ENCODE measurements at regions of chr3 and their contacts with region 1.

Region 1: DNA sequence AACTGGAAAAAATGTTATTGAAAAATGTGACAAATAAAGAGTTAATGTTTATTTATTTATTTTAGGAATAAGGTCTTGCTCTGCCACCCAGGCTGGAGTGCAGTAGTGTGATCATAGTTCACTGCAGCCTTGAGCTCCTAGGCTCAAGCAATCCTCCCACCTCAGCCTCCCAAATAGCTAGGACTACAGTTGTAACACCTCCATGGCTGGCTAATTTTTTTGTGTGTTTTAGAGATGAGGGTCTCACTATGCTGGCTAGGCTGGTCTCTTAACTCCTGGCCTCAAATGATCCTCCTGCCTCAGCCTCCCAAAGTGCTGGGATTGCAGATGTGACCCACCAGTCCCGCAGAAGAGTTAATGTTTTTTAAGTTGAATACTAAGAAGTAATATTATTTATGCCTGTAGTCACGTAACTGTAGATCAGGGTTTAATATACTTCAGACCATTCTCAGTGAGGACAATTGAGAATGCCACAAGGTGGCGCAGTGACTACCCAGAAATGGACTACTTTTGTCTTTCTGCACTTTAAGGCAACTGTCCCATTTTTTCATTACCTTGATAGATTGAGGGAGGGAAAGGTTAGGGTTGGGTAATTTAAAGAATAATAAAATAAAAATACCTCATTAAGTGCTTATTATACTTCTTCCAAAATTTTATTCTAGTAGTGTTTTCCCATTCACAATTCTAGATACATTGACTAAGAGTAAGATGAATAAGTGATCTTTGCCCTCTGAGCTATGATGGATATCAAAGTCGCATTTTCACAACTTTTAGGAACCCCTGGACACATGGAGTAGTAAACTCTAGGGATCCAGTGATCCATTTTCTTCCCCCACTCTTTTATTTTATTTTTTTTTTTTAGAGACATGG is 6.0 kb downstream of the MUC13 start:
- DNase-seq: peak in 7 of 10 donors; percentile 19 to 74 (median 57)
- H3K4me3 ChIP-seq: no peak overlapping the region
- H3K27ac ChIP-seq: no peak overlapping the region
- H3K27me3 ChIP-seq: no peaks in the 10 kb centered on the region
- CTCF ChIP-seq: peak; percentile 45 to 80 (median 68)

Region 2: DNA sequence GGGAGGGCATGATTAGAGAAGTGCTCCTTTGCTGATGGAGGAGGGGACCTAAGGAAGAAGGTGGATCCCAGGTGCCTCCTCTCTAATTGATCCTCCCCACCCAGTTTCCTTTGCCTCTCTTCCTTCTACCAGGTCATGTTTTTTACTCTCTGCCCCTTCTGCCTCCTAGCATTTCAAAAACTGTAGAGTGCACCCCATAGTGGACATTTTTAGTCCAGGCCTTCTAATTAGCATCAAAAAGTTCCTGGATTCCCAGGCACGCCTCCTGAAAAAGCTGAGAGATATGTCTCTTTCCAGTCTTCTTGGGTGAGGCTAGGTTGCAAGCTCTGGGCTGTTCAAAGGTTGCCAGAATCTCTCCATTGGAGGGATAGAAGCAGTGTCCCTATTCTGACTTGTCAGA is 22.7 kb before region 1 on chr3:
- intact Hi-C with region 1: no loop called
- DNase-seq: no peak
- H3K4me3 ChIP-seq: no peak overlapping the region
- H3K27ac ChIP-seq: no peak overlapping the region
- H3K27me3 ChIP-seq: no peaks in the 10 kb centered on the region
- CTCF ChIP-seq: no peak

Region 3: DNA sequence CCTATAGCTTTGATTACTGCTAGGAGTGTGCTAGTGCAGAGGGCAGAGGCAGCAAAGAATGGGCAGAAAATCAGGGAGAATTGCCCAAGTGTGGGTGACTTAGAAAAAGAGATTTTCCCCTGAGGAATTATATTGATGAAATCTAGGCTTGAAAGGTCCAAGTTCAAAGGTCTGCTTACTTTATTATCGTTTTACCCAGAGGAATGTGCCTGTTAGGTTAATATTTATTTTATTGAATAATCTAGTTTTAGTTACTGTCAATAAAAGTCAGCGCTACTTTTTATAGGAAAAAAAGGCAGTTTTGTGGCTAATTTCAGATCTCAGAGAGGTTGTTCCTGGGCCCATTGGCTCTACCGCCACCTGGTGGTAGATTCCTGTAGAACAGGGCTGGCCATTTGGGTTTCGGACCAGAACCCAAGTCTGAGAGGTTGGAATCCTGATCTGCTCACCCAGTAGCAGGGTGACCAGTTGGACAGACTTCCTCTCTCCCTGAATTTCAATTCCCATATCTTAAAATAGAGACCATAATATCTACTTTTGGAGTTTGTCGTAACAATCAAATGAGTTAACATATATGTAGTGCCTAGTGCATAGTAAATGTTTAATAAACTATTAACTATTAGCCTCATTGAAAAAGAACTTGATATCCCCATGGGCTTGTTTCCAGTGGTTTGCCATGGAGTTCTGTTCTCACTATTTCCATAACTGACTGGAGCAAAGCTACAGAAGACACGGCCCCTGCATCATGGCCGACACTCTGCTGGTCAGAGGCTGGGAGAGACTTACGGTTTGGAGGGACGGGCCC is 509.3 kb after region 1 on chr3:
- intact Hi-C with region 1: loop called in 1 of 2 experiments (anchors 10 kb)
- DNase-seq: peak; percentile 34 to 75 (median 62)
- H3K4me3 ChIP-seq: no peak overlapping the region
- H3K27ac ChIP-seq: no peak overlapping the region
- H3K27me3 ChIP-seq: no peaks in the 10 kb centered on the region
- CTCF ChIP-seq: peak; percentile 93 to 100 (median 98)